ENCODE measurements at regions of chr10 and their contacts with region 1.

Region 1: GRCh38 chr10:109883859-109884771 is 39.2 kb downstream of the XPNPEP1 start:
- DNase-seq: peak; percentile 70
- H3K4me3 Mint-ChIP-seq: no peak overlapping the region
- H3K27ac Mint-ChIP-seq: no peak overlapping the region
- H3K4me1 Mint-ChIP-seq: peaks cover 21% of the 10 kb centered on the region
- H3K27me3 Mint-ChIP-seq: no peaks in the 10 kb centered on the region

Region 2: DNA sequence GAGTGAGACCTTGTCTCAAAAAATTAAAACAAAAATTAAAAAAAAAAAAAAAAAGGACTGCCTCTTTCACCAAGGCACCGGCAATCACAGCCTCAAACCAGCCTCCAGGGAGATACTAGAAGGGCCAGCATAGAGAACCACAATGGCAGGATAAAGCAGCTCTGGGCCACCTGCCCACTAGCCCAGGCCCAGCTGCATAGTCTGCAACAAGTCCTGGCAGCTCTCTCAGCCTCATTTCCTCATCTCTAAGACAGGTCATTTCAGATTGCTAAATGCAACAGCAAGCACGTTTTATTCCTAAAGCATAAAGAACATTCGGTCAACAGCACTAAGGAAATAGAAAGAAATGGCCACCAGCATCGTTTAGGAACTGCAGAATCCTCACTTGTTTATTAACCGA is 10.4 kb after region 1 on chr10:
- CTCF ChIA-PET with region 1: interaction called, 21 read pairs
- POLR2A ChIA-PET with region 1: no interaction called
- intact Hi-C with region 1: no loop called
- DNase-seq: no peak
- H3K4me3 Mint-ChIP-seq: no peak overlapping the region
- H3K27ac Mint-ChIP-seq: no peak overlapping the region
- H3K4me1 Mint-ChIP-seq: peaks cover 48% of the 10 kb centered on the region
- H3K27me3 Mint-ChIP-seq: no peaks in the 10 kb centered on the region

Region 3: DNA sequence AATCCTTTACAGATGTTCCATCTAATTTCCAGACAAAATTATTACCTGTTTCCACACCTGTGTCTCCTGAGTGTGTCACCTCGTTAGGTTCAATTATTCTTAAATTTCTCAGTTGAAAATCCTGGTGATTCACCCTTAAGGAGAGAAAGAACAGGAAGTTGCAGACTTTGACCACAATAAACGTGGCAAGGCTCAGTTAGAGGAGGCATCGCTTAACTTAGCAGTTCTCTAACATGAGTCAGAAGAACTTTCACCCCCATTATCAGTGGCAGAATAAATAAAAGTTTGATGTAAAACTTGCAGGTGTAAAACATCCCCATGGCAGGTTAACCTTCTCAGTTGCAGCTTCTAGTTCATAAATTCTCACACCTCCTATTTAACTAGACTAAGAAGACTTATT is 30.9 kb after region 1 on chr10:
- CTCF ChIA-PET with region 1: interaction called, 19 read pairs
- POLR2A ChIA-PET with region 1: no interaction called
- intact Hi-C with region 1: loop called (anchors 2 kb)
- DNase-seq: peak; percentile 56
- H3K4me3 Mint-ChIP-seq: peak overlapping the region; percentile 2
- H3K27ac Mint-ChIP-seq: peak overlapping the region; percentile 58
- H3K4me1 Mint-ChIP-seq: peaks cover 92% of the 10 kb centered on the region
- H3K27me3 Mint-ChIP-seq: no peaks in the 10 kb centered on the region

Region 4: DNA sequence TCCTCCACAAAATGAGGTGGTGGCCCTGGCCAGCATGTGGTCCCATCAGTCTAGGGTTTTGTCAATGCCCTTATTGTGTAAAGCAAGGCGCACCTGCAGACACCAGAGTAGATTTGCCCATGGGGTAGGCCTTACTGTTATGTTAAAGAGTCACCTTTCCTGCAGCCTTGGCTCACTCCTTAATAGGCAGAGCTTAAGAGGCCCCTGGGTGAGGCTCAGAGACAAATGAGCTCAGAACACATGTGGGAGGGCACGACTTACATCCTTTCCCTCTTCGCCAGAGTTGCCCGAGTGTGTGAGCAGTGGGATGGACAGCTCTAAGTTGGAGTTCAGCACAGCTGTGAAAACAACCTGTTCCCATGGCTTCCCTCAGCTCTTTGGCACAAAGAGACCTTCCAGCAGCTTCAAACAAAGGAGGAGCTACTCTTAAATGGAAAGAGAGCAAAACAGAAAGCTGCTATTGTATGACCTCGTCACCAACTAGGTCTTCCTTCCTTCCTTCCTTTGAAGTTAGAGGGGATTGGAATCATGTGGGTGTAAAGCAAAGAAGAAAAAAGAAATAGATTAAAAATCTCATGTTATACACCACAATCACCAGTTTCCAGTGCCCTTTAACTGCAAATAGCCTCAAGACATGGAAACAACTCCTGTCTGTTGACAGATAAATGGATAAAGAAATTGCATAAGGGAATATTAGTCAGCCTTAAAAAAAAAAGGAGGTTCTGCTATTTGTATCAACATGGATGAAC is 51.0 kb after region 1 on chr10:
- CTCF ChIA-PET with region 1: interaction called, 14 read pairs
- POLR2A ChIA-PET with region 1: no interaction called
- intact Hi-C with region 1: no loop called
- DNase-seq: peak; percentile 47
- H3K4me3 Mint-ChIP-seq: peak overlapping the region; percentile 74
- H3K27ac Mint-ChIP-seq: peak overlapping the region; percentile 87
- H3K4me1 Mint-ChIP-seq: peaks cover 66% of the 10 kb centered on the region
- H3K27me3 Mint-ChIP-seq: no peaks in the 10 kb centered on the region

Region 5: DNA sequence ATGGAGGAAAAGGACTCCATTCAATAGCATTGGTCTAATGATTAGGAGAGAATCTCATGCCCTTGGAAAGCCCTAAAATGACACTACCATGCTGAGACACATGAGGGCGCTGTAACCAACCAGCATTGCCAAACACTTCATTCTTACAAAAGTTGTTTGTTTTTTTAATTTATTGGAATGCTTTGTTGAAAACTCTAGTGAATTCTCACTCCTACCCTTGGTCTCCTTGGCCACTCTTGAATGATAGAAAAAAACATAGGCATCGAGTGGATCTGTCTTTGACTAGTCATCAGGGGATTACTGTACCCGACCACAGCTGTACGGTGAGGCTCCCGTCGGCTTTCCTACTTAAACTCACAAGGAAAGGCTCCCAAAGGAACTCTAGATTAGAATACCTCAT is 94.4 kb after region 1 on chr10:
- CTCF ChIA-PET with region 1: interaction called, 23 read pairs
- POLR2A ChIA-PET with region 1: no interaction called
- intact Hi-C with region 1: loop called (anchors 1 kb)
- DNase-seq: peak; percentile 76
- H3K4me3 Mint-ChIP-seq: no peak overlapping the region
- H3K27ac Mint-ChIP-seq: no peak overlapping the region
- H3K4me1 Mint-ChIP-seq: peaks cover 4% of the 10 kb centered on the region
- H3K27me3 Mint-ChIP-seq: no peaks in the 10 kb centered on the region

Region 6: GRCh38 chr10:110137142-110137545 is 253.0 kb after region 1 on chr10:
- CTCF ChIA-PET with region 1: interaction called, 11 read pairs
- POLR2A ChIA-PET with region 1: no interaction called
- intact Hi-C with region 1: loop called (anchors 2 kb)
- DNase-seq: no peak
- H3K4me3 Mint-ChIP-seq: no peak overlapping the region
- H3K27ac Mint-ChIP-seq: peak overlapping the region; percentile 6
- H3K4me1 Mint-ChIP-seq: peaks cover 37% of the 10 kb centered on the region
- H3K27me3 Mint-ChIP-seq: no peaks in the 10 kb centered on the region